ENCODE measurements at regions of chr17 and their contacts with region 1.

Region 1: GRCh38 chr17:42221937-42222745 is 27.8 kb upstream of the GHDC start:
- DNase-seq: peak; percentile 78 to 90 (median 86)
- H3K4me3 ChIP-seq: no peak overlapping the region
- H3K27ac ChIP-seq: no peak overlapping the region
- H3K4me1 ChIP-seq: peaks cover 0 to 22% (median 3%) of the 10 kb centered on the region in 4 experiments
- H3K27me3 ChIP-seq: no peaks in the 10 kb centered on the region

Region 2: DNA sequence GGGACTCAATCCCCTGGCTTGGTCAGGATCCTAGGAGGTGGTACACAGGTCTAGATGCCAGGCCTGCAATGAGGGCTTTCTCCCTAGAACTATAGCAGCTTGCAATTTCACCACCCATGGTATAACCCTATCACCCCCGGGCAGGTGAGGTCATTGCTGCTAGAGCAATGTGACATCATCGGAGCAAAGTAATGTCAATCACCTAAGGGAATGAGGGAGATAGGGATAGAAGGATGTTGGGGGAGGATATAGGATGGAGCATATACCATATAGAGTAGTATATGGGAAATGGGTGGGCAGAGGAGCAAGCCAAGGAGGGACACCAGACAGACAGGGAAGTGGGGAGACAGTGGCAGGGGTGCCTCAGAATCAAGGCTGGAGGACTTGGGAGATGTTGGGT is 44.5 kb before region 1 on chr17:
- CTCF ChIA-PET with region 1: no interaction called
- POLR2A ChIA-PET with region 1: no interaction called
- DNase-seq: no peak
- H3K4me3 ChIP-seq: no peak overlapping the region
- H3K27ac ChIP-seq: no peak overlapping the region
- H3K4me1 ChIP-seq: peaks cover 3 to 20% (median 18%) of the 10 kb centered on the region in 4 experiments
- H3K27me3 ChIP-seq: peaks cover 0 to 35% (median 16%) of the 10 kb centered on the region in 5 experiments

Region 3: DNA sequence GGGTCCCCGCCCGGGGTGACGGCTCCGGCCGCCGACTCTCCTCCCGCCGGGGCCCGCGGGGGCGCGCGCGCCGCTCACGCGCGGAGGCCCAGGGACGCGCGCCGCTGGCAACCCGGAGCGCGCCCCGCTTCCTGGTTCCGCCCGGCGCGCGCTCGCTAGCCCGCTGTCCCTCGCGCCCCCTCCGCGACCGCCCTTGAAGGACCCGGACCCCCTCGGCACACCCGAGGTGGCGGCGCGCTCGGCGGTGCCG is 54.1 kb after region 1 on chr17 and contains the start of gene STAT5B:
- CTCF ChIA-PET with region 1: interaction called, 25 read pairs
- POLR2A ChIA-PET with region 1: interaction called, 5 read pairs
- DNase-seq: peak in 2 of 3 donors; percentile 72 to 85
- H3K4me3 ChIP-seq: peak within 1 kb of the TSS; percentile 68 to 94 (median 86)
- H3K27ac ChIP-seq: peak within 1 kb of the TSS; percentile 67 to 84
- H3K4me1 ChIP-seq: peaks cover 38 to 54% (median 45%) of the 10 kb centered on the region in 4 experiments
- H3K27me3 ChIP-seq: no peaks in the 10 kb centered on the region

Region 4: DNA sequence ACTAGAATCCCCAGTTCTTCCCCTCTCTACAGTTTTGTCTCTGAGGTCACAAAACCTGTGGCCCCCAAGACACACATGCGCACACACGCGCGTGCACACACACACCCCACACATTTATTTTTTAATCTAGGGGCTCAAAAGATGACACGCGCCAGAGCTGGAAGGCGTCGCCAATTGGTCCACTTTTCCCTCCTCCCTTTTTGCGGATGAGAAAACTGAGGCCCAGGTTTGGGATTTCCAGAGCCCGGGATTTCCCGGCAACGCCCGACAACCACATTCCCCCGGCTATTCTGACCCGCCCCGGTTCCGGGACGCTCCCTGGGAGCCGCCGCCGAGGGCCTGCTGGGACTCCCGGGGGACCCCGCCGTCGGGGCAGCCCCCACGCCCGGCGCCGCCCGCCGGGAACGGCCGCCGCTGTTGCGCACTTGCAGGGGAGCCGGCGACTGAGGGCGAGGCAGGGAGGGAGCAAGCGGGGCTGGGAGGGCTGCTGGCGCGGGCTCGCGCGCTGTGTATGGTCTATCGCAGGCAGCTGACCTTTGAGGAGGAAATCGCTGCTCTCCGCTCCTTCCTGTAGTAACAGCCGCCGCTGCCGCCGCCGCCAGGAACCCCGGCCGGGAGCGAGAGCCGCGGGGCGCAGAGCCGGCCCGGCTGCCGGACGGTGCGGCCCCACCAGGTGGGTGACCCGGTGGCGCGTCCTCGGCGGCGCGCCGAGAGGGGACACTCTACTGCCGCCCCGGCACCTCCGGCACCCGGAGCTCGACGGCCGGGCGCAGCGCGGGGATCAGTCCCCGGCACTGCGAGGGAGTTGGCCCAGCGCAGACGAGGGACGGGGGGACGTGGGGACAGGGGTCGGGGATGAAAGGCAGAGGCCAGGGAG is 66.0 kb after region 1 on chr17 and contains the start of gene STAT5A:
- CTCF ChIA-PET with region 1: interaction called, 18 read pairs
- POLR2A ChIA-PET with region 1: interaction called, 30 read pairs
- DNase-seq: peak; percentile 83 to 95 (median 93)
- H3K4me3 ChIP-seq: peak within 1 kb of the TSS; percentile 69 to 88 (median 77)
- H3K27ac ChIP-seq: peak within 1 kb of the TSS; percentile 83 to 86
- H3K4me1 ChIP-seq: peaks cover 2 to 51% (median 47%) of the 10 kb centered on the region in 4 experiments
- H3K27me3 ChIP-seq: no peaks in the 10 kb centered on the region

Region 5: DNA sequence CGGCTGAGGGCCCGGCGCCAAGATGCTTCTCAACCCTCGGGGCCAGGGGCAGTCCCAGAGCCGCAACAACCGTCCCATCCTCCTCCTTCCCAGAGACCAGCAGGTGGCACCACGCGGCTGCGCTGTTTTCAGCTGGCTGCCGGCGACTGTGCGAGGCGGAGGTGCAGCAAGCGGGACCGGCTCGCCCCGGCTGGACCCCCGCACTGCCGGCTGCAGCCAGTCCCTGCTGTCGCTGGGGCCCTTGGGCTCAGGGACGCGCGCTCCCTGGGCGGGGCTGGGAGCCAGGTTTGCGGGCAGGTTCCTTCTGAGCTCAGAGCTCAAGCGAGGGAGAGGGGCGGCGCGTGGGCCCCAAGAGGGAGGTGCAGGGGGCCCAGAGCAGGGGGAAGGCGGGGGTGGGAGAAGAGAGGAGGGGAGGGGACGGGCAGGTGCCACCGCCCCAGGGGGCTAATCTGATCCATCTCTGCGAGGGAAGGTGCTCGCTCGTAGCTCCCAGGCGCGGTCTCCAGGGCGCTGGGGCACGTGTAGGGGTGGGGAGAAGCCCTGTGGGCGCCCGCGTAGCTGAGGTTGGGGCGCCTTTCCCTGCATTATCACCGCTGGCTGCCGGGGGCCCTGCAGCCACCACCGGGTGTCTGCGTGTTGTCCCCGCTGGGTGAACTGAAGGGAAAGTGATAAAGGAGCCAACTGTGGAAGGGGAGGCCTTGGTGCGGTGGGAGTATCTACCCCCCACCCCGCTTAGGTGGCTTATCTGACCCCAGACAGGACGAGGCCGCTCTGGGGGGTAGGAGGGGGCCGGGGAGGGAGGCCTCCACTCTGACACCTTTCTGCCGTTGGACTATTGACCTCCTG is 90.4 kb after region 1 on chr17:
- CTCF ChIA-PET with region 1: interaction called, 25 read pairs
- POLR2A ChIA-PET with region 1: no interaction called
- DNase-seq: peak; percentile 90 to 95 (median 93)
- H3K4me3 ChIP-seq: peak overlapping the region in 3 of 7 experiments; percentile 43 to 51 (median 48)
- H3K27ac ChIP-seq: peak overlapping the region; percentile 62 to 99
- H3K4me1 ChIP-seq: peaks cover 24 to 82% (median 74%) of the 10 kb centered on the region in 4 experiments
- H3K27me3 ChIP-seq: no peaks in the 10 kb centered on the region

Region 6: GRCh38 chr17:42337442-42337841 is 115.3 kb after region 1 on chr17:
- CTCF ChIA-PET with region 1: no interaction called
- POLR2A ChIA-PET with region 1: no interaction called
- DNase-seq: peak in 2 of 3 donors; percentile 63 to 68
- H3K4me3 ChIP-seq: no peak overlapping the region
- H3K27ac ChIP-seq: no peak overlapping the region
- H3K4me1 ChIP-seq: peaks cover 0 to 8% (median 3%) of the 10 kb centered on the region in 4 experiments
- H3K27me3 ChIP-seq: no peaks in the 10 kb centered on the region